ENCODE measurements at regions of chr13 and their contacts with region 1.

Region 1: GRCh38 chr13:73248711-73249578 is 190.1 kb downstream of the KLF5 start:
- DNase-seq: no peak
- ATAC-seq: peak in 1 of 4 donors; percentile 64
- H3K4me3 ChIP-seq: no peak overlapping the region
- H3K27ac ChIP-seq: no peak overlapping the region
- H3K4me1 ChIP-seq: no peaks in the 10 kb centered on the region
- H3K27me3 ChIP-seq: no peaks in the 10 kb centered on the region
- CTCF ChIP-seq: no peak

Region 2: GRCh38 chr13:73261739-73262216 is 12.8 kb after region 1 on chr13:
- intact Hi-C with region 1: loop called in 1 of 2 experiments (anchors 2 kb)
- DNase-seq: no peak
- ATAC-seq: peak in 1 of 4 donors; percentile 35
- H3K4me3 ChIP-seq: no peak overlapping the region
- H3K27ac ChIP-seq: no peak overlapping the region
- H3K4me1 ChIP-seq: no peaks in the 10 kb centered on the region
- H3K27me3 ChIP-seq: no peaks in the 10 kb centered on the region
- CTCF ChIP-seq: no peak

Measured in psoas muscle (tissue), 8 donors.